HepG2 (cell line): ENCODE measurements at regions of chr11 and their contacts with region 1.

Region 1: DNA sequence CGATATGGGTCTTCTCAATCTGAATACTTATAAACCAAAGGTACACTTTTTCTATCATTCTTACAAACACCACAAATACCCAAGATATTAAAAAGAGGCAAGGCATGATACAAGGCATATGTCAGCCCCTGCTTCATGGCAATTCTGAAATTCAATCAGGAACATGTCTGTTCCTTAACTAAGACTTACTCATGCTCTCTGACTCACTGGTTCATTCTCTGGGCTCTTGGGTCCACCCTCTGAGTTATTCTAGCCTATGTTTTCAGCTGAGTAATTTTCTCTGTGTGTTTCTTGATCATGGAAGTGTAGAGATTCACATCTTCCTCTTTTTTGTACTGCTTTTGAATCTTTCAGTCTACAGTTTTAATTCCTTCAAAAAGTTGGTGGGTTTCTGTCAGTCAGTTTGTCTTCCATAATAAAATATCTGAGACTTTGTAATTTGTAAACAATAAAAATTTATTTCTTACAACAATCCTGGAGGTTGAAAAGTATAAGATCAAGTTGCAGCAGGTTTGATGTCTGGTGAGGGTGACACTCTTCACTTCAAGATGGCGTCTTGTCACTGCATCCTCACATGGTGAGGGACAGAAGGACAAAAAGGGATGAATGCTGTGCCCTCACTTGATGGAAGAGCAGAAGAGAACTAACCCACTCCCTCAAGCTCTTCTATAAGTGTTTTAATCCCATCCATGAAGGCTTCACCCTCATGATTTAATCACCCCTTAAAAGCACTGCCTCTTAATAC is 211.7 kb downstream of the FAM76B start:
- DNase-seq: no peak
- ATAC-seq: no peak
- H3K4me3 ChIP-seq: no peak overlapping the region
- H3K27ac ChIP-seq: no peak overlapping the region
- H3K4me1 ChIP-seq: no peaks in the 10 kb centered on the region
- H3K27me3 ChIP-seq: no peaks in the 10 kb centered on the region
- CTCF ChIP-seq: no peak
- EP300 ChIP-seq: no peak
- POLR2A ChIP-seq: no peak
- RAD21 ChIP-seq: no peak

Region 2: DNA sequence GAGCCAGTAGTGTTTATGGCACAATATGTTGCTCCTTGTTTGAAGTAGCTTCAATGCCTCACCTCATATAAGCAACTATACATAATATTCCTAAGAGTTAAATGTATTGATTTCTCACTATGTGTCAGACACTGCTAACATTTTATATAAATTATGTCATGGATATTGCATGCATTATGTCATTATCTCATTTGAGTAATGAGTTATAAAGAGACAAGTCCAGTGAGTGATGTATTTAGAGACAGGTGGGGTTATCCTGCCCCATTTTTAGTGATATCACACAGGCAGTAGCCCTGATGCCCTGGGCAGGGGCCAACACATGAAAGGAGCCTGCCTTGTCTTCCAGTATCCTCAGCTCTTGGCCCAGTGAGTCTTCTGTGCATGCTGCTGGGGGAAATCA is 99.9 kb before region 1 on chr11:
- CTCF ChIA-PET with region 1: no interaction called
- POLR2A ChIA-PET with region 1: no interaction called
- in situ Hi-C with region 1: no loop called
- intact Hi-C with region 1: loop called (anchors 10 kb)
- DNase-seq: no peak
- ATAC-seq: no peak
- H3K4me3 ChIP-seq: no peak overlapping the region
- H3K27ac ChIP-seq: no peak overlapping the region
- H3K4me1 ChIP-seq: no peaks in the 10 kb centered on the region
- H3K27me3 ChIP-seq: no peaks in the 10 kb centered on the region; a peak in 1 of 5 replicates
- CTCF ChIP-seq: no peak
- EP300 ChIP-seq: no peak
- POLR2A ChIP-seq: no peak
- RAD21 ChIP-seq: no peak

Region 3: GRCh38 chr11:95778699-95779098 is 200.8 kb after region 1 on chr11:
- CTCF ChIA-PET with region 1: no interaction called
- POLR2A ChIA-PET with region 1: no interaction called
- in situ Hi-C with region 1: no loop called
- intact Hi-C with region 1: no loop called
- DNase-seq: no peak
- ATAC-seq: no peak
- H3K4me3 ChIP-seq: no peak overlapping the region
- H3K27ac ChIP-seq: no peak overlapping the region
- H3K4me1 ChIP-seq: no peaks in the 10 kb centered on the region
- H3K27me3 ChIP-seq: no peaks in the 10 kb centered on the region
- CTCF ChIP-seq: no peak
- EP300 ChIP-seq: no peak
- POLR2A ChIP-seq: no peak
- RAD21 ChIP-seq: no peak